ENCODE measurements at regions of chr1 and their contacts with region 1.

Region 1: DNA sequence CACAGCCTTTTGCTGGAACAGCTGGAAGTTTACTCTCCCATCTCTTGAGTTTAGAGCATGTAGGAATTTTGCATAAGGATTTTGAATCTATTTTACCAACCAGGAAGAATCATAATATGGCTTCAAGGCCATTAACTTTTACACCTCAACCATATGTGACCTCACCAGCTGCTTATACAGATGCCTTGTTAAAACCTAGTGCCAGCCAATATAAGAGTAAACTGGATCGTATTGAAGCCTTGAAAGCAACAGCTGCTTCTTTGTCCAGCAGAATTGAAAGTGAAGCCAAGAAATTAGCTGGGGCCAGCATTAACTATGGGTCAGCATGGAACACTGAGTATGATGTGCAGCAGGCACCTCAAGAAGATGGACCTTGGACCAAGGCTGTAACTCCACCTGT is 65.4 kb downstream of the CEP350 start:
- DNase-seq: no peak
- ATAC-seq: no peak
- H3K4me3 ChIP-seq: no peak overlapping the region
- H3K27ac ChIP-seq: no peak overlapping the region
- H3K4me1 ChIP-seq: no peaks in the 10 kb centered on the region
- H3K27me3 ChIP-seq: no peaks in the 10 kb centered on the region
- CTCF ChIP-seq: no peak
- EP300 ChIP-seq: no peak
- POLR2A ChIP-seq: no peak
- RAD21 ChIP-seq: no peak

Region 2: GRCh38 chr1:180003026-180003695 is 16.9 kb before region 1 on chr1:
- CTCF ChIA-PET with region 1: no interaction called
- POLR2A ChIA-PET with region 1: interaction called, 10 read pairs
- in situ Hi-C with region 1: no loop called
- intact Hi-C with region 1: no loop called
- DNase-seq: no peak
- ATAC-seq: peak; percentile 23; the same call in 1 of the 3 replicates
- H3K4me3 ChIP-seq: no peak overlapping the region
- H3K27ac ChIP-seq: no peak overlapping the region
- H3K4me1 ChIP-seq: no peaks in the 10 kb centered on the region
- H3K27me3 ChIP-seq: no peaks in the 10 kb centered on the region
- CTCF ChIP-seq: no peak
- EP300 ChIP-seq: no peak
- POLR2A ChIP-seq: no peak
- RAD21 ChIP-seq: no peak

Region 3: GRCh38 chr1:180252638-180253536 is 232.9 kb after region 1 on chr1:
- CTCF ChIA-PET with region 1: no interaction called
- POLR2A ChIA-PET with region 1: no interaction called
- in situ Hi-C with region 1: no loop called
- intact Hi-C with region 1: no loop called
- DNase-seq: peak; percentile 81 to 88 (median 86)
- ATAC-seq: peak; percentile 82
- H3K4me3 ChIP-seq: no peak overlapping the region
- H3K27ac ChIP-seq: no peak overlapping the region
- H3K4me1 ChIP-seq: peaks cover 0 to 21% of the 10 kb centered on the region in 2 experiments; a peak in 3 of 5 replicates
- H3K27me3 ChIP-seq: peaks cover 17 to 47% of the 10 kb centered on the region in 2 experiments; a peak in 4 of 5 replicates
- CTCF ChIP-seq: peak; percentile 96 to 99 (median 98)
- EP300 ChIP-seq: no peak
- POLR2A ChIP-seq: no peak
- RAD21 ChIP-seq: peak; percentile 87 to 97